ENCODE measurements at regions of chr10 and their contacts with region 1.

Region 1: DNA sequence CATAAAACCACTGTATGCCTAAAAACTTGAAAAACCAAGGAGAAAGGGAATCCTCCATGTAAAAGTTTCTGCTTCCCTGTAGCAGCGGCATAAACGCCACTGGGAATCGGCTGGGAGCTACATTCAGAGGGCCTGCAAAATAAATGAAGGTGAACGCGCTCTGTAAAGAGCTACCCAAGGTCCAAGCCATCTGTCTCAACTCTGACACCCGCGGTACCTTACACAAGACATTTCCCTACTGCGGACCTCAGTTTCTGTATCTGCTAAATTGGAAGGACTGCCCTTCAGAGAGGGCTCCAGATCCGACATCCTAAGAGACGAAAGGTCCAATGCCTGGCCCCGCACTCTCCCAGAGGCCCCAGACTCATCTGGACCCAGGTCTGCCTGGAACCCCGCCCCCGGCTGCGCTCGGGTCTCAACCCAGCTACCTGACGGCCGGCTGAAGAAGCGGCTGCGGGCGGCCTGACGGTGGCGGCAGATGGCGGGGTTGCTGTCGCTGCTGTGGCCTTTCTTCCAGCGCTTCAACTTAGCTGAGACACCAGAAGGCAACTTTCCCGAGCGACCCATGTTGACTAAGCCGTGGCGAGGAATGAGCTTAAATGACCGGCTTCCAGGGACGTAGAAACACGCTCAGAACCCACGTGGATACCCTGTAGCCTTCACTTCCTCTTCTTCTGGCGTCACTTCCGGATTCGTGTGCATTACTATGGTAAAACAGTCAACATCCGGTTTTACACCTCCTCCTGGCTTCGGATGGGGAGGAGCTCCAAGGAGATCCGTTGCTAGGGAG is at the start of gene RRP12:
- DNase-seq: peak; percentile 87 to 88
- ATAC-seq: peak; percentile 97 to 99
- H3K4me3 ChIP-seq: peak within 1 kb of the TSS; percentile 72 to 97 (median 94)
- H3K27ac ChIP-seq: peak within 1 kb of the TSS; percentile 89 to 97 (median 94)
- H3K4me1 ChIP-seq: peaks cover 14 to 15% of the 10 kb centered on the region in 2 donors
- H3K27me3 ChIP-seq: no peaks in the 10 kb centered on the region
- CTCF ChIP-seq: no peak
- POLR2A ChIP-seq: peak; percentile 79
- total RNA-seq, gene RRP12: 41.9 to 61.4 (median 49.9) TPM

Region 2: DNA sequence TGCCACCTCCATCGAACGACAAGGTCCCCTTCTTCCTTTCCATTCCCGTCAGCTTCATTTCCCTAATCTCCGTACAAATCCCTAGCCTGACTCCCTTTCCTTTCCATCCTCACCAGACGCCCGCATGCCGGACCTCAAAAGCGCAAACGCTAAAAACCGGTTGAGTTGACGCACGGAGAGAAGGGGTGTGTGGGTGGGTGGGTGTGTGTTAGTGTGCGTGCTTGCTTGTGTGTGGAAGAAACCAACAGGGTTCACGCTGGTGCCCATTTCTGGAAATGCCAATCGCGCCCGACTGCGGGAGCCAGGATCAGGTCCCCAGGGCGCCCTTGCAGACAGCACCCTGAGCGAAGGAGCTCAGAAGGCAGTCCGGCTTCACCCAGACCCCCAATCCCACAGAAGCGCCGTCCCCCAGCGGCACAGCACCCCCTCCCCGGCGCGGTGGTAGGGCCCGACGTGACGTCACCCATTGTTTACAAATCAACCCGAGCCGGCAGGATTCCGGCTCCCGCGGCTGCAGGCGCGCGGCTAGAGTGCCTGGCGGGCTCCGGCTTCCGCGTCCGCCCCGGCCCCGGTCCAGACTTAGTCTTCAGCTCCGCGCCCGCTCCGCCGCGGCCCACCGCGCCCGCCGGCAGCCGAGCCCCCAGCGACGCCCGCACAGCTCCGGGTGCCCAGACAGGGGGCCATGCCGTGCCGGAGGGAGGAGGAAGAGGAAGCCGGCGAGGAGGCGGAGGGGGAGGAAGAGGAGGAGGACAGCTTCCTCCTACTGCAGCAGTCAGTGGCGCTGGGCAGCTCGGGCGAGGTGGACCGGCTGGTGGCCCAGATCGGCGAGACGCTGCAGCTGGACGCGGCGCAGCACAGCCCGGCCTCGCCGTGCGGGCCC is 81.8 kb before region 1 on chr10 and contains the start of gene FRAT1:
- in situ Hi-C with region 1: no loop called
- intact Hi-C with region 1: no loop called
- DNase-seq: peak; percentile 76 to 80
- ATAC-seq: peak; percentile 91 to 94
- H3K4me3 ChIP-seq: peak within 1 kb of the TSS; percentile 74 to 88 (median 79)
- H3K27ac ChIP-seq: peak within 1 kb of the TSS; percentile 93 to 97 (median 96)
- H3K4me1 ChIP-seq: peaks cover 18 to 19% of the 10 kb centered on the region in 2 donors
- H3K27me3 ChIP-seq: no peaks in the 10 kb centered on the region
- CTCF ChIP-seq: no peak
- POLR2A ChIP-seq: peak; percentile 81 to 92
- total RNA-seq, gene FRAT1: 1.7 to 7.6 (median 3.2) TPM

Region 3: GRCh38 chr10:97736902-97737769 is 336.3 kb after region 1 on chr10 and contains the start of gene ZFYVE27:
- in situ Hi-C with region 1: no loop called
- intact Hi-C with region 1: loop called (anchors 5 kb)
- DNase-seq: peak; percentile 89 to 93
- ATAC-seq: peak; percentile 97
- H3K4me3 ChIP-seq: peak within 1 kb of the TSS; percentile 76 to 96 (median 93)
- H3K27ac ChIP-seq: peak within 1 kb of the TSS; percentile 82 to 93 (median 86)
- H3K4me1 ChIP-seq: peaks cover 12 to 19% of the 10 kb centered on the region in 2 donors
- H3K27me3 ChIP-seq: no peaks in the 10 kb centered on the region
- CTCF ChIP-seq: no peak
- POLR2A ChIP-seq: peak; percentile 88 to 95
- total RNA-seq, gene ZFYVE27: 7.6 to 14.9 (median 11.6) TPM

Measured in gastrocnemius medialis (tissue), 4 donors.